Activated CD4-positive, alpha-beta T cell treated with anti-CD3 and anti-CD28 coated beads, Interleukin-2, amount 10 ng/mL, durations not matched to agents 24 days and 14 days (primary cell): ENCODE measurements at regions of chr1 and their contacts with region 1.

Region 1: DNA sequence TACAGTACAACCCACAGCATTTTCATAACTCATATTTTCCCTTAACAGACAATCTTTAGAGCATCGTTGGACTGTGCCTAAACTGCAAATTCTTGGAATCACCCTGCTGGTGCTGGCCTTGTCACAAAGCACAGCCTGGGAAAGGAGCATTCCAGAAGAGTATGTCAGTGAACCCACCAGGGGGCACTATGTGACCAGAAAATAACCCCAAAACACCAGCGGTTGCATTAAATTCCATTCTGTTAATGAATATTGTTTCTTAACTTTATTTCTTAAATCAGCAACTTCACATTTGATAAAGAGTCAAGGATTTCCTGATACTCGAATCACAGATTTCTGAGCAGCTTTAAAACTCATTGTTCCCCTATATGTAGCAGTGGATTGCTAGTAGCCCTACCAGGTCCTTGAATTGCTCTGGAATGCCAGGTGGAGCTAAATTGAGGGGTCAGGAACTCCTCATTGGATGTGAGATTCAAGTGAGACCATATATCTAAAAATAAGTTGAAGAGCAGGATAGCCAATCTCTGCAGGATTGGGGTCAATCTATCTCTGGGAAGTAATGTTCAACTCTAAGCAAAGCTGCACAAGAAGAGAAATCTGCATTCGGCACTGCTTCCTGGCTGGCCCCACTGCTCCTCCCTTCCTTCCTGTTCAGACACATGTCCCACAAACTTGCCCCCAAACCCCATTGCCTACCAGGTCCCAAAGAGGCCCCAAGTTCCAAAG is 12.7 kb upstream of the RAB4A start:
- DNase-seq: peak; percentile 89
- H3K4me3 Mint-ChIP-seq: no peak overlapping the region
- H3K27ac Mint-ChIP-seq: peak overlapping the region; percentile 24
- H3K4me1 Mint-ChIP-seq: peaks cover 27% of the 10 kb centered on the region
- H3K27me3 Mint-ChIP-seq: peaks cover 9% of the 10 kb centered on the region

Region 2: GRCh38 chr1:228664399-228664914 is 593.7 kb before region 1 on chr1:
- intact Hi-C with region 1: loop called (anchors 1 kb)
- DNase-seq: peak; percentile 92
- H3K4me3 Mint-ChIP-seq: no peak overlapping the region
- H3K27ac Mint-ChIP-seq: no peak overlapping the region
- H3K4me1 Mint-ChIP-seq: peaks cover 3% of the 10 kb centered on the region
- H3K27me3 Mint-ChIP-seq: peaks cover 27% of the 10 kb centered on the region

Region 3: GRCh38 chr1:229270547-229271447 is 12.6 kb after region 1 on chr1 and contains the start of gene RAB4A:
- intact Hi-C with region 1: loop called (anchors 2 kb)
- DNase-seq: peak; percentile 95
- H3K4me3 Mint-ChIP-seq: peak within 1 kb of the TSS; percentile 91
- H3K27ac Mint-ChIP-seq: peak within 1 kb of the TSS; percentile 83
- H3K4me1 Mint-ChIP-seq: peaks cover 20% of the 10 kb centered on the region
- H3K27me3 Mint-ChIP-seq: no peaks in the 10 kb centered on the region
- total RNA-seq, gene RAB4A: 30.7 and 34.8 TPM in 2 replicates

Region 4: DNA sequence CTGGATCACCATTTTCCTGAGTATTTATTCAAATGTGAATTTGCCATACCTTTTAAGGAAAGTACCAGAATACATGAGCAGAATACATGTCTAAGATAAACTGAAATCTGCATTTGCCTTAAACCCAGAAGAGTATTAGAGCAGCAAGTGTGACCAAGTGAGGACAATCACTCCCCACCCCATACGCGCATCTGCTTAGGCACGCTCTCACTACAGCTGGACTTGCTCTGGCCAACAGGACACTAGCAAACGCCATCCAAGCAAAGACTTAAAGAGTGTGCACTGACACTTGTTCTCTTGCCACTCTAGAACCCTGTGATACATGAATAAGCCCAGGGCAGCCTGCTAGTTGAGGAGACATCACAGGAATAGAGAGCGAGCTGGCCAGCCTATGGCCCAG is 224.3 kb after region 1 on chr1:
- intact Hi-C with region 1: loop called (anchors 1 kb)
- DNase-seq: no peak
- H3K4me3 Mint-ChIP-seq: no peak overlapping the region
- H3K27ac Mint-ChIP-seq: peak overlapping the region; percentile 12
- H3K4me1 Mint-ChIP-seq: peaks cover 7% of the 10 kb centered on the region
- H3K27me3 Mint-ChIP-seq: no peaks in the 10 kb centered on the region

Region 5: GRCh38 chr1:229514578-229515275 is 256.5 kb after region 1 on chr1:
- intact Hi-C with region 1: loop called (anchors 1 kb)
- DNase-seq: peak; percentile 88
- H3K4me3 Mint-ChIP-seq: no peak overlapping the region
- H3K27ac Mint-ChIP-seq: no peak overlapping the region
- H3K4me1 Mint-ChIP-seq: peaks cover 8% of the 10 kb centered on the region
- H3K27me3 Mint-ChIP-seq: no peaks in the 10 kb centered on the region

Region 6: DNA sequence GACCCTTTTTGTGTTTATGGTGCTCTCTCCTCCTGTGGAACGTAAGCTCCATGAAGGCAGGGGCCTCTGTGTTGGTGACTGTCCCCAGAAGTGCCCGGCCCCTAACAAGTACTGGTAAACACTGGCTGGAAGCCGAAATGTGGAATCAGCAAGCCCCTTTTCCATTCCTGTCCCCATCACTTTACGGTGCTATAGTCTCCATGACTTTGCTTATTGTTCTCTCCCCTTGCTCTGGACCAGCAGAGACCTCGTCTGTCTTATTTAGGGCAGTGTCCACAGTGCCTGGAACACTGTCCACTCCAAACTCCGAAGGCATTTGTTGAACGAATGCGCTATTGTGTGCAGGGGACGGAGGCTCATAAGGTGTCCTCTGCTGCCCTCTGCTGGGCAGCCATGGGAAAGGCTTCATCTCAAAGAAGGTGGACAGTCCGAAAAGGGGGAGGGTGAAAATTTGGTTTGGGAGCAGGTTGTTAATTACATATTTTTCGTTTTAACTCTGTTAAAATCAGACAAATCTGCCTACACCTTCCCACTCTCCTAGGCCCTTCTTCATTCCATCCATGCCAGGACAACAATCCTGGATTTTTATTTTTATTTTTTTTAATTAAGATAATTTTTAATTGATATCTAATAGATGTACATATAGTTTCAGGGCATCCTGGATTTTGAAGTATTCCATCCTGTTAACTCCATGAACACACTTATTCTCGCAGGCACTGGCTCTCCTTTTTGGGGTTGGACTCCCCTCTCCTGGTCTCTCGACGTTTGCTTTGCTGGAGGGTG is 1052.4 kb after region 1 on chr1:
- intact Hi-C with region 1: loop called (anchors 5 kb)
- DNase-seq: peak; percentile 86
- H3K4me3 Mint-ChIP-seq: no peak overlapping the region
- H3K27ac Mint-ChIP-seq: no peak overlapping the region
- H3K4me1 Mint-ChIP-seq: peaks cover 10% of the 10 kb centered on the region
- H3K27me3 Mint-ChIP-seq: peaks cover 10% of the 10 kb centered on the region